ENCODE measurements at regions of chr3 and their contacts with region 1.

Region 1: DNA sequence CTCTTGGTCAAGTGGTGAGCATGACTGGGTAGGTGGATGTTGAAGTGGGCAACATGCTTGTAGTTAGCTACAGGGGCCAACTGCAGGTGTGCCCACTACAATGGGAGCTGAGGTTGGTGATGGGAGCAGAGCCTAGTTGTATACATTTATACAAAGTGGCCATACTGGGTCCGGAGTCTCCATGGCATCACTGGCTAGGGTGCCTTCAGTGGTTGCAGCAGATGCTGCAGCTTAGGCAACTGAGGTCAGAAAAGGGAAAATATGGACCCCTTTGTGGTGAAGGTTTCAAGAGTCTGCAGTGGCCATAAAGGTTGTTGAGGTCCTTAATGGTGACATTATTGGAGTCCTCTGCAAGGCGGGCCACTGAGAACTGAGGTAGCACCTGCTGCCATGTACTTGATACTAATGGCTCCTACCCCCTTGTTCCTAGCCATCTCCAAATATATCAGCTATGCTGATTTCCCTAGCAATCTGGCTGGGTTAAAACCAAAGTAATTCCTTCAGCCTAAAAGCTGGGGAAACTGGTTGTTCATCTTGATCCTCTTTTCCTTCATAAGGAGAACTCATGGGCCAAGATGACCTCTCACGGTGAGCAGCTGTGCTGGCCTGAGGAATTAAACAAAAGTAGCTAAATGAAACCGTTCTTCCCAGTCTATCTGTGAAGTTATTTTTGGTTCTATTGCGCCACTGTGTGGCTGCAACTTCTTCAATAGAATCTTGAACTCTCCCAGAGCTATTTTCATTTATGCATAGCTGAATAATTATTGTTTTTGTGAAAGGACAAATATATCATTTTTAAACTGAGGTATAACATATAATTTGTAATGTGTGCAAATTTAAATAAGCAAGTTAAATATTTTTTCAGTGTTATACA is 76.0 kb upstream of the PLSCR4 start:
- DNase-seq: peak; percentile 75
- H3K4me3 Mint-ChIP-seq: no peak overlapping the region
- H3K27ac Mint-ChIP-seq: no peak overlapping the region
- H3K4me1 Mint-ChIP-seq: no peaks in the 10 kb centered on the region
- H3K27me3 Mint-ChIP-seq: no peaks in the 10 kb centered on the region
- CTCF ChIP-seq: peak; percentile 58

Region 2: DNA sequence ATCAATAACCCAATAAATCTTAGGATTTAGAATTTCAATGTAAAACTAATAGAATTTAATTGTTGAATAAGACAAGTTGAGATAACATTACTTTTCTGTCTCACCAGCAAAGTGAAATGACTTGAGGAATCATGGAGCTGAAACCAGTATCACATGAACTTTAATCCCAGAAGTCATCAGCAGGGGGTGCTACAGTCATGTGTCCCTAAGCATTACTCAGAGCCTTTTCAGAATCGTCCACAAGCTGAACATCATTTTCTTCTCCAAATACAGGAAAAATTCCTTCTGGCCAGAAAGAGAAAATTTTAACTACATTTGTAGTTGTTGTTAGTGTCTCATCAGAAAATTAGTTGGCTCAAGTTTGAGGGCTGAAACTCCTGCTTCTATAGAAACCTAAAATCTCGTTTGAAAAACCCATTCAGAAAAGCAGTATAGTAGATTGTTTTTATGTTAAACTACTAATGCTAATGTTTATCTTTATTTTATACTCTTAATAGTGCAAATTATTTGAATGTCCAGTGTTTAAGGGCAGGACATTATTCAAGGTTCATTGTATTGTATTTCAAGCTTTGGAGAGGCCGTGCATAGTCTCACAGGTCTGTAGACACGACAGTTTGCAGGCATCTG is 550.0 kb before region 1 on chr3:
- CTCF ChIA-PET with region 1: interaction called, 3 read pairs
- POLR2A ChIA-PET with region 1: no interaction called
- intact Hi-C with region 1: loop called (anchors 2 kb)
- DNase-seq: peak; percentile 78
- H3K4me3 Mint-ChIP-seq: no peak overlapping the region
- H3K27ac Mint-ChIP-seq: no peak overlapping the region
- H3K4me1 Mint-ChIP-seq: no peaks in the 10 kb centered on the region
- H3K27me3 Mint-ChIP-seq: peaks cover 68% of the 10 kb centered on the region
- CTCF ChIP-seq: peak; percentile 78

Region 3: GRCh38 chr3:146195030-146195429 is 131.9 kb before region 1 on chr3:
- CTCF ChIA-PET with region 1: interaction called, 177 read pairs
- POLR2A ChIA-PET with region 1: interaction called, 16 read pairs
- intact Hi-C with region 1: no loop called
- DNase-seq: no peak
- H3K4me3 Mint-ChIP-seq: no peak overlapping the region
- H3K27ac Mint-ChIP-seq: no peak overlapping the region
- H3K4me1 Mint-ChIP-seq: no peaks in the 10 kb centered on the region
- H3K27me3 Mint-ChIP-seq: no peaks in the 10 kb centered on the region
- CTCF ChIP-seq: no peak

Region 4: DNA sequence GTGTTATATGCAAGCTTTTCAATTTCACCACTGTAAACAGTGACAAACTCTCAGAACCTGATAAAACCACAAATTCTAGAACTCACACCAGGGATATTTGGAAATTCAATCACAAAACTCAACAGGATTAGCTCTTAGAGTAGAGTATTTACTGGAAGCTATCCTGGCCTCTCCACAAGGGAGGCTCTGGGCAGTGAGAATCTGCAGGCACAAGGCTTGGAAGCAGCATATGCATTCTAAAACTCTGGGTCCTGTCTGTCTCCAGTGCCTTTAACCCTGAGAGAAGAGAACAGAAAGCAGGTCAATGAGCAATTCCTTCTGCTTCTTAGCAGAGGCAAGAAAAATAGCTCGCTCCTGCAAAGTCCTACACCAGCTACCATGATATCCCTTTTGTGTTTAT is 99.4 kb before region 1 on chr3:
- CTCF ChIA-PET with region 1: interaction called, 116 read pairs
- POLR2A ChIA-PET with region 1: interaction called, 7 read pairs
- intact Hi-C with region 1: no loop called
- DNase-seq: no peak
- H3K4me3 Mint-ChIP-seq: no peak overlapping the region
- H3K27ac Mint-ChIP-seq: no peak overlapping the region
- H3K4me1 Mint-ChIP-seq: peaks cover 5% of the 10 kb centered on the region
- H3K27me3 Mint-ChIP-seq: no peaks in the 10 kb centered on the region
- CTCF ChIP-seq: no peak

Region 5: GRCh38 chr3:146249921-146250320 is 77.0 kb before region 1 on chr3:
- CTCF ChIA-PET with region 1: interaction called, 13 read pairs
- POLR2A ChIA-PET with region 1: no interaction called
- intact Hi-C with region 1: no loop called
- DNase-seq: no peak
- H3K4me3 Mint-ChIP-seq: peak overlapping the region; percentile 88
- H3K27ac Mint-ChIP-seq: peak overlapping the region; percentile 96
- H3K4me1 Mint-ChIP-seq: peaks cover 14% of the 10 kb centered on the region
- H3K27me3 Mint-ChIP-seq: no peaks in the 10 kb centered on the region
- CTCF ChIP-seq: no peak

Region 6: GRCh38 chr3:146342989-146343388 is 16.1 kb after region 1 on chr3:
- CTCF ChIA-PET with region 1: interaction called, 14 read pairs
- POLR2A ChIA-PET with region 1: no interaction called
- intact Hi-C with region 1: no loop called
- DNase-seq: no peak
- H3K4me3 Mint-ChIP-seq: no peak overlapping the region
- H3K27ac Mint-ChIP-seq: no peak overlapping the region
- H3K4me1 Mint-ChIP-seq: no peaks in the 10 kb centered on the region
- H3K27me3 Mint-ChIP-seq: no peaks in the 10 kb centered on the region
- CTCF ChIP-seq: no peak

Region 7: GRCh38 chr3:147030274-147030673 is 703.4 kb after region 1 on chr3:
- CTCF ChIA-PET with region 1: no interaction called
- POLR2A ChIA-PET with region 1: no interaction called
- intact Hi-C with region 1: no loop called
- DNase-seq: no peak
- H3K4me3 Mint-ChIP-seq: no peak overlapping the region
- H3K27ac Mint-ChIP-seq: no peak overlapping the region
- H3K4me1 Mint-ChIP-seq: no peaks in the 10 kb centered on the region
- H3K27me3 Mint-ChIP-seq: peaks cover 16% of the 10 kb centered on the region
- CTCF ChIP-seq: no peak

Measured in MCF 10A (cell line).